ENCODE measurements at regions of chrX and their contacts with region 1.

Region 1: GRCh38 chrX:107776649-107777535 is 641 bp upstream of the NCBP2L start:
- DNase-seq: peak; percentile 59 to 93 (median 82)

Region 2: GRCh38 chrX:107654872-107655761 is 121.8 kb before region 1 on chrX:
- intact Hi-C with region 1: loop called (anchors 10 kb)
- DNase-seq: peak in 28 of 42 donors; percentile 7 to 73 (median 34)

Region 3: DNA sequence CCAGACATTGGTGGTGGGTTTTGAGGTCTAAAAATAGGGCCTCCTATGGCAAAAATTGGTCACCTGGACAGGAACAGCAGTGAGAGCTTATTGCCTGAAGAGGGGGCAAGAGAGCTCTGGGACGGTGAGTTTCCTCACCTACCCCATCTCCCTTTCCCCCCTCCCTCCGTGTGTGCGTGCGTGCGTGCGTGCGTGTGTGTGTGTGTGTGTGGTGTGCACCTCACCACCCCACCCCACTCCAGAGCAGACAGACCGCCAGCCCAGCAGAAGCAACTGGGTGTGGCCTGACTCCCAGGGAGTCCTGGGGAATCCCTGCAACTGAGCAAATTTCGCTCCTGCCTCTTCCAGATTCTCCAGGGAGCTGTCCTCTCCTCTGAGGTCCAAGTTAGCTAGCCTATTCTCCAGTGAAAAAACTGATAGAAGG is 103.9 kb before region 1 on chrX:
- intact Hi-C with region 1: loop called (anchors 5 kb)
- DNase-seq: peak in 38 of 42 donors; percentile 9 to 72 (median 50)

Region 4: DNA sequence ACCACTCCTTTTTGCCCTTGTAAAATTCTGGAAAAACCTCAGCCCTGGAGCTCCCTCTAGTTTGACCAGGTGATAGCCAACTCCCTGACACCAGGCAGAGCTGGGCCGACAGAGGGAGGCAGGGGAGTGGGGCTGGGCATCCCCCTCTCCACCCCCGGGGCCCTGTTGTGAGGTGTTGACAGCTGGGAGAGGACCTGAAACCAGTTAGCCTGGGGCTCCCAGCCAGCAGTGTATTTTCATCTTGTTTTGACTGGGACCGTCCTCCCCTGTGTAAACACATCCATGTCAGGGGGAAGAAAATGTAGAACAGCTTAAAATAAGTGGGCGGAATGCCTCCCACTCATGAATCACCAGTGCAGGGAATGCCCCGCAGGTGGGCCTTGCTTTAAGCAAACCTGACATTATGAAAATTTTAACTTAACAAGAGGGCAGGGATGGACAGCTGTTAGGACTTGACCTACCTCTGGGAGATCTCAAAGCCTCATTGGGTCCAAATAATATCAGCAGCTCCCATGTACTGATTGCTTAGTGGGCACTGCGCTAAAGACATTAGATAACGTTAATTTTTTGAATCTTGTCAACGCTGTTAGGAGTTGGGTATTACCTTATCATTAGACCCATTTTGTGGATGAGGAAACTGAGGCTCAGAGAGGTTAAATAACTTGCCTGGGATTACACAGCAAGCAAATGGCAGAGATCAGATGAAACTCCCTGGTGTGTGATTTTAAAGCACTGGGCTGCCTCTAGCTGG is 47.2 kb before region 1 on chrX:
- intact Hi-C with region 1: loop called (anchors 10 kb)
- DNase-seq: no peak

Measured in head of caudate nucleus (tissue), 42 donors.